Activated naive CD4-positive, alpha-beta T cell treated with anti-CD3 and anti-CD28 coated beads, Interleukin-2, amount 10 ng/mL, durations not matched to agents 7 days and 5 days (primary cell): ENCODE measurements at regions of chr15 and their contacts with region 1.

Region 1: GRCh38 chr15:31435261-31435911 is 108.8 kb downstream of the KLF13 start:
- DNase-seq: peak; percentile 91
- H3K4me3 Mint-ChIP-seq: peak overlapping the region; percentile 71
- H3K27ac Mint-ChIP-seq: peak overlapping the region; percentile 100
- H3K4me1 Mint-ChIP-seq: peaks cover 92% of the 10 kb centered on the region
- H3K27me3 Mint-ChIP-seq: no peaks in the 10 kb centered on the region

Region 2: GRCh38 chr15:31200735-31201151 is 234.6 kb before region 1 on chr15:
- CTCF ChIA-PET with region 1: interaction called, 18 read pairs
- DNase-seq: peak; percentile 88
- H3K4me3 Mint-ChIP-seq: no peak overlapping the region
- H3K27ac Mint-ChIP-seq: peak overlapping the region; percentile 19
- H3K4me1 Mint-ChIP-seq: peaks cover 51% of the 10 kb centered on the region
- H3K27me3 Mint-ChIP-seq: peaks cover 61% of the 10 kb centered on the region

Region 3: GRCh38 chr15:31215490-31216214 is 219.7 kb before region 1 on chr15:
- CTCF ChIA-PET with region 1: interaction called, 17 read pairs
- DNase-seq: peak; percentile 87
- H3K4me3 Mint-ChIP-seq: peak overlapping the region; percentile 69
- H3K27ac Mint-ChIP-seq: peak overlapping the region; percentile 94
- H3K4me1 Mint-ChIP-seq: peaks cover 65% of the 10 kb centered on the region
- H3K27me3 Mint-ChIP-seq: peaks cover 10% of the 10 kb centered on the region

Region 4: GRCh38 chr15:31326156-31326732 is 109.1 kb before region 1 on chr15:
- CTCF ChIA-PET with region 1: interaction called, 20 read pairs
- DNase-seq: peak; percentile 99
- H3K4me3 Mint-ChIP-seq: peak overlapping the region; percentile 94
- H3K27ac Mint-ChIP-seq: peak overlapping the region; percentile 99
- H3K4me1 Mint-ChIP-seq: peaks cover 63% of the 10 kb centered on the region
- H3K27me3 Mint-ChIP-seq: no peaks in the 10 kb centered on the region

Region 5: DNA sequence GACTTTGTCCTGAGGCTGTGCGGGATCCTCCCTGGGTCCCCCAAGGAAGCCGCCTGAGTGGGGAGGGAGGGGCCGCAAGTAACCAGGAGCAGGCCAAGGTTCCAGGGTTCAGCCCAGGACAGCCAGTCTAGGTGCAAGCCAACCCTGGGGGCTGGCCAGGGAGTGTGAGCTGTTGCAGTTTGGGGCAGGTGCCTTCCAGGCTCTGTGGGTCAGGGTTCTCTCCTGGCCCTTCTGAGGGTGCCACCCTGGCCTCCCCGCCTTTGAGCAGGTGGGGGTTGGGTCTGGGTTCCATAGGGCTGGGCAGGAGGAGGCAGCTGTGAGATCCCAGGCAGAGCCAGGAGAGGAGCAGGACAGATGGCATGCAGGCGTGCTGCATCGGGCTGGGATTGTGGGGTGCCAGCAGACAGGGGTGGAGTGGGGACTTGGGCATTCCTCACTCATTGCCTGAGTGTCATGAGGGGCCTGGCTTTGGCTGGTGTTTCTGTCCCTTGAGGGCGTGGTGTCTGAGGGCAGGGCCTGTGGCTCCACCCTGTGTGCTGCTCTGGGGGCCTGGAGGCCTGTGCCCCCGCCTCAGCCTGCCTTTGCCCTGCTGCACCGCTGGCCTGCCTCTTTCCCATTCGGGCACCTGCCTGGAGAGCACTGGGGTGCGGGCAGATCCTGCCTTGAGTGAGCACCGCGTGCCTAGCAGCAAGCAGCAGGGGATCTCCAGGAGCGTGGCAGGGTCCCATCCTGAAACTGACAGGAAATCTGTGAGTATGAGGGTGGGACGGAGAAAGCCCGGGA is 90.4 kb before region 1 on chr15:
- CTCF ChIA-PET with region 1: interaction called, 21 read pairs
- DNase-seq: no peak
- H3K4me3 Mint-ChIP-seq: peak overlapping the region; percentile 85
- H3K27ac Mint-ChIP-seq: peak overlapping the region; percentile 99
- H3K4me1 Mint-ChIP-seq: peaks cover 100% of the 10 kb centered on the region
- H3K27me3 Mint-ChIP-seq: no peaks in the 10 kb centered on the region

Region 6: GRCh38 chr15:31472636-31473384 is 37.4 kb after region 1 on chr15:
- CTCF ChIA-PET with region 1: interaction called, 100 read pairs
- DNase-seq: peak; percentile 86
- H3K4me3 Mint-ChIP-seq: peak overlapping the region; percentile 36
- H3K27ac Mint-ChIP-seq: peak overlapping the region; percentile 91
- H3K4me1 Mint-ChIP-seq: peaks cover 47% of the 10 kb centered on the region
- H3K27me3 Mint-ChIP-seq: peaks cover 6% of the 10 kb centered on the region